Esophagus squamous epithelium (tissue), 5 donors: ENCODE measurements at regions of chr19 and their contacts with region 1.

Region 1: DNA sequence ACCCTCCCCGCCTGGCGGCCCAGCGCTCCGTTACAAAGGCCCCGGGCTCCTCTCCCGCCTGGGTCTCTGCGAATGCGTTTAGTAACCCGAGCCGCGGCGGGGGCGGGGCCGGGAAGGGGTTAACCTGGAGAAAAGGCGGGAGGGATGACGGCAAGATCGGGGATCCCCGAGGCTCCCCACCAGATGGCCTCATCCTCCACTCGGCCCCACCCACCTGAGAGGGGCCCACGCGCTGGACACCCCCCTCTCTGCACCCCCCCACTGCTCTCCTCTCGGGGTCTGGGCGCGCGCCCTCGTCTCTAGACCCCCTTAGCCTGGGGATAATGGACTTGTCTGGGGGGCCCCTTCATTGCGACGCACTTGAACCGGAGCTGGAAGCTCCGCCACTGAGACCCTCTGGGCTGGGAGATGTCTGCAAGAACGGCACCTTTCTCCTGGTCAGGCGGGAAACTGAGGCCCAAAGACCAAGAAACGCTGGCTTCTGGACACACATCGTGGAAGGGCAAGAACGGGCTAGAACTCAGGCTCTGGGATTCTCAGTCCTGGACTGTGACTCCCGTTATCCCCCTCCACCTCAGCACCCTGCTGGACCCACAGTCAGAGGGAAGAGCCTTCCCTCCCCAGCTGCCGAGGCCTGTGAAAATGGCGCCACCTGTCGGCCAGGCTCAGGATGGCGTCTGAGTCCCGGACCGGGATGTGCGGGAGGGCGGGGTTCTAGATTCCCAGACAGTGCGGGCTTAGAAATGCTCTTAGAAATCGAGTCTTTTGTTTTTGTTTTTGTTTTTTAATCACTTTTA is 2.9 kb upstream of the LTBP4 start:
- DNase-seq: no peak
- H3K4me3 ChIP-seq: peak overlapping the region in 1 of 4 donors; percentile 4
- H3K27ac ChIP-seq: peak overlapping the region in 1 of 4 donors; percentile 95
- H3K4me1 ChIP-seq: peaks cover 52 to 75% (median 53%) of the 10 kb centered on the region in 3 donors
- H3K27me3 ChIP-seq: peaks cover 0 to 65% (median 12%) of the 10 kb centered on the region in 4 donors
- CTCF ChIP-seq: peak; percentile 82 to 99 (median 98)
- POLR2A ChIP-seq: no peak

Region 2: DNA sequence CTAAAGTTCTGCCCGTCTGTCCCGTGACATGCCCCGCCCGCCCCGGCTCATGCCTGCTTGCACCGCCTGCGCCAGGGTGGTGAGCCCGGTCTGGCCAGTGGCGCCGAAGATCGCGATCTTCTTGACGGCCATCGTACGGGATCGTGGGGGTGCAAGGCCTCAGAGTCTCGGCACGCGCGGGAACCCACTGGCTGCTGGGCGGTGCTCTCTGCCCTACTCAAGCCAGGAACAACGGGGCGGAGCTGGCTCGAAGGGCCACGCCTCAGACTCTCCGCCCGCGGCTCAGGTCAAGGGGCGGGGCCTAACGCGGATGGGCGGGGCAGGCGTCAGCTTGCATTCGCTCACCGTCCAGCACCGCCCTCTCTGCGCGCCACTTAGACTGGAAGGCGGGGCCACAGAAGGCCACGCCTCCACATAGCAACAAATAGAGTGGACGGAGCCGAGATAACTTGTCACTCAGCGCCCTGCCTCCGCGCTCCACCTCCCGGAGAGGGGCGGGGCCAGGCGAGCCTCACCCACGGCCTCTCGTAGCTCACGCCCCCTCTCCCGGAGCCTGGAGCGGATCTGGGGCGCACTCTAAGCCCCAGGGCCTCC is 132.7 kb before region 1 on chr19 and contains the start of gene BLVRB:
- intact Hi-C with region 1: loop called (anchors 10 kb)
- DNase-seq: peak; percentile 90
- H3K4me3 ChIP-seq: peak within 1 kb of the TSS; percentile 52 to 95 (median 75)
- H3K27ac ChIP-seq: peak within 1 kb of the TSS; percentile 93 to 100 (median 96)
- H3K4me1 ChIP-seq: peaks cover 29 to 63% (median 29%) of the 10 kb centered on the region in 3 donors
- H3K27me3 ChIP-seq: peaks cover 0 to 7% (median 0%) of the 10 kb centered on the region in 4 donors
- CTCF ChIP-seq: peak in 1 of 6 experiments; percentile 5
- POLR2A ChIP-seq: peak in 3 of 4 donors; percentile 77 to 94 (median 82)
- total RNA-seq, gene BLVRB: 177 to 283 (median 236) TPM

Region 3: GRCh38 chr19:40542202-40542859 is 56.0 kb before region 1 on chr19:
- intact Hi-C with region 1: loop called (anchors 5 kb)
- DNase-seq: no peak
- H3K4me3 ChIP-seq: no peak overlapping the region
- H3K27ac ChIP-seq: no peak overlapping the region
- H3K4me1 ChIP-seq: peaks cover 0 to 6% (median 5%) of the 10 kb centered on the region in 3 donors
- H3K27me3 ChIP-seq: no peaks in the 10 kb centered on the region
- CTCF ChIP-seq: no peak
- POLR2A ChIP-seq: no peak

Region 4: DNA sequence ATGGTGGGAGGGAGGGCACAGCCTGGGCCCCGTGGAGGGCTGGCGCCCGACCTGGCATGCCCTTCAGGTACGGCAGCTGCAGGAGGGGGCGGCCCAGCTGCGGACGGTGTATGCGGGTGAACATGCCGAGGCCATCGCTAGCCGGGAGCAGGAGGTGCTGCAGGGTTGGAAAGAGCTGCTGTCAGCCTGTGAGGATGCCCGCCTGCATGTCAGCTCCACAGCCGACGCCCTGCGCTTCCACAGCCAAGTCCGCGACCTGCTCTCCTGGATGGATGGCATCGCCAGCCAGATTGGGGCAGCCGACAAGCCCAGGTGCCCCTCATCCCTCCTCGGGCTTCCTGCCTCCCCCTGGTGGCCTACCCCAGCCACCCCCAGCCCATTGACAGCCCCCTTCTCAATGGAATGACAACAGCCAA is 38.2 kb before region 1 on chr19:
- intact Hi-C with region 1: no loop called
- DNase-seq: no peak
- H3K4me3 ChIP-seq: no peak overlapping the region
- H3K27ac ChIP-seq: no peak overlapping the region
- H3K4me1 ChIP-seq: no peaks in the 10 kb centered on the region
- H3K27me3 ChIP-seq: peaks cover 0 to 59% (median 0%) of the 10 kb centered on the region in 4 donors
- CTCF ChIP-seq: no peak
- POLR2A ChIP-seq: no peak